GM12878 (cell line): ENCODE measurements at regions of chr9 and their contacts with region 1.

Region 1: DNA sequence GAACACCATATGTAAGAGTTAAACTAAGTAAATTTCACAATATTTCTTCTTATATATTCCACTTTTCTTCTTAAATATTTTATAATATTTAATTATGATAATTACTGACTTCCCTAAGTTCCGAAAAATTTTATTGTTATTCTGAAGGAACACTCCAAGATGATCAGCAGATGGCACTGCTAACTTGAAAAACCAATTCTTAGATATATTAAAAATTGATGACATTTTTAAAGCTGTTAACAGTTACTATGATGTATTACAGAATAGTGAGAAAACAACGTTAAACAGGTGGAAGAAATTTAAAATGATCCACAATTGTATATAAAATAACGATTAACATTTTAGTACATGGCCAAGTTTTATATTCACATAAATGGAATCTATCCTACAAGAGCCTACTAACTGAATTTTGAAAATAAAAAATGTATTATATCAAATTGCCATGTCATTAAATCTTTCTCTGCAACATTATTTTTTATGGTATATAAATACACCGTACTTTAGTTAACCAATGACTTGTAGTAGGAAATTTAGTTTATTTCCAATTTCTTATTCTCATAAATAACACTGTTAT is 30.1 kb upstream of the MUSK start:
- DNase-seq: no peak
- ATAC-seq: peak; percentile 43; the same call in 1 of the 3 replicates
- H3K4me3 ChIP-seq: no peak overlapping the region
- H3K27ac ChIP-seq: no peak overlapping the region
- H3K4me1 ChIP-seq: no peaks in the 10 kb centered on the region
- H3K27me3 ChIP-seq: no peaks in the 10 kb centered on the region
- CTCF ChIP-seq: peak in 2 of 3 experiments; percentile 11 to 21; a peak in 3 of 6 replicates
- EP300 ChIP-seq: no peak
- POLR2A ChIP-seq: no peak
- RAD21 ChIP-seq: peak; percentile 81

Region 2: GRCh38 chr9:110604171-110604601 is 34.3 kb before region 1 on chr9:
- CTCF ChIA-PET with region 1: no interaction called
- POLR2A ChIA-PET with region 1: no interaction called
- RAD21 ChIA-PET with region 1: no interaction called
- SMC1A ChIA-PET with region 1: no interaction called
- in situ Hi-C with region 1: no loop called
- intact Hi-C with region 1: no loop called
- DNase-seq: no peak
- ATAC-seq: peak; percentile 56
- H3K4me3 ChIP-seq: no peak overlapping the region
- H3K27ac ChIP-seq: no peak overlapping the region
- H3K4me1 ChIP-seq: no peaks in the 10 kb centered on the region
- H3K27me3 ChIP-seq: no peaks in the 10 kb centered on the region
- CTCF ChIP-seq: no peak
- EP300 ChIP-seq: no peak
- POLR2A ChIP-seq: no peak
- RAD21 ChIP-seq: no peak

Region 3: GRCh38 chr9:110650991-110651411 is 12.5 kb after region 1 on chr9:
- CTCF ChIA-PET with region 1: interaction called, 4 read pairs
- POLR2A ChIA-PET with region 1: no interaction called
- RAD21 ChIA-PET with region 1: no interaction called
- SMC1A ChIA-PET with region 1: interaction called, 11 read pairs
- in situ Hi-C with region 1: no loop called
- intact Hi-C with region 1: no loop called
- DNase-seq: no peak
- ATAC-seq: no peak
- H3K4me3 ChIP-seq: no peak overlapping the region
- H3K27ac ChIP-seq: no peak overlapping the region
- H3K4me1 ChIP-seq: no peaks in the 10 kb centered on the region
- H3K27me3 ChIP-seq: no peaks in the 10 kb centered on the region
- CTCF ChIP-seq: no peak
- EP300 ChIP-seq: no peak
- POLR2A ChIP-seq: no peak
- RAD21 ChIP-seq: no peak

Region 4: DNA sequence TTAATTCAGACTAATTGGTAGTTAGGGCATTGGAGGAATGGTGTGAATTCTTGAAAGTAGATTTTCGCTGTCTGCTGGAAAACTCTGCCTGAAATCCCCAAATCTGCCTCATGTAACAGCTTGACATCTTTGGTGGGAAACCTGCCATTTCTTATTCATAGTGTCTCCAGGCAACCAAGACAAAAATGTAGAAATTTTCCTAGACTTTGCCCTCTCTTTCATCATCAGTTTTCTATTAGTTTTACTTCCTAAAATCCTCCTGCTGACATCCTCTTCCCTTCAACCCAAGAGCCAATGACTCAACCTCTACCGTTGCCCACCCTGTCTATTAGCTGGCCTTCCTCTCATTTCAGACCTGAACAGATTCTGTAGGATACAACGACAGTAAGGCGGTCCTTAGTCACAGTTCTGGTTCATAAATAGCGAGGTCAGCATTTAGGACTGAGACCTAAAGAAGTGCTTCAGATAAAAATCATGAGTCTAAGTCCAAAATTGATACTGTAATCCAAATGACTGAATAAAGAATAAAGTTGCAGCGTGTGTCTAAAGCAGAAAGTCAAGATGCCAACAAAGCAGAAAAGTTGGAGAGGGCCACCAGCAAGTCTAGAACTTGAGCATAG is 164.1 kb after region 1 on chr9:
- CTCF ChIA-PET with region 1: no interaction called
- POLR2A ChIA-PET with region 1: no interaction called
- RAD21 ChIA-PET with region 1: interaction called, 17 read pairs
- SMC1A ChIA-PET with region 1: interaction called, 18 read pairs
- in situ Hi-C with region 1: no loop called
- intact Hi-C with region 1: no loop called
- DNase-seq: no peak
- ATAC-seq: peak; percentile 77
- H3K4me3 ChIP-seq: no peak overlapping the region
- H3K27ac ChIP-seq: no peak overlapping the region
- H3K4me1 ChIP-seq: peaks cover 9% of the 10 kb centered on the region
- H3K27me3 ChIP-seq: no peaks in the 10 kb centered on the region
- CTCF ChIP-seq: no peak
- EP300 ChIP-seq: peak in 1 of 2 experiments; percentile 29; a peak in 1 of 4 replicates
- POLR2A ChIP-seq: no peak
- RAD21 ChIP-seq: no peak

Region 5: DNA sequence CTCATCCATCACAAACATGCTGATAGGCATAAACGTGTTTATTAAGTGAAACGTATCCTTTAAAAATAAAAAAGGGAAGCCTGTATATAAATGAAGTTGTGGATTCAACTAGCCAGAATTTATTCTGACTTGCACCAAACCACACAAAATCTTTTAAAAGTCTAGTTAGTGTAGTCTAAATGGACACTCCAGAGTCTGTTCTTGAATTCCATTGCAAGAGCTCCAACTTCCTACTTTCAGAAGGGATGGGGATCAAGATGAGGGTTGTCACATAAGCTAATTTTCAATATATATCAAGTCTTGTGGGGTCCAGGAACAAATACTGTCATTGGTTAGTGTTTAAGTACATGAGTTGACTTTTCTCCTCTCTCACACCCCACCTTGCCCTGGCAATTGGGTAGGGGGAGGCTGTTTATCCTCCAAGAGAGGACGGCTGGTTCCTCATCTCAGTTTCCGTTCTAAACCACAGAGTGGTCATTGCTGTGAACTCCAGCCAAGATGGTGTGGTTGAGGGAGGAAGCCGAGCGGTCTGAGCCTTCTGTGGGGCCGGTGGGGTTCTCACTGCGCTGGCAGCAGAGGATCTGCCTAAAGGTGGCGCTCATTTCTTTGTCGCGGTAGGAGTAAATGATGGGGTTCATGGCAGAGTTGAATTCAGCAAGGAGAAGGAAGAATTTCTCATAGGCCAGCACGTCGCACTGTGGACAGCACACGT is 236.7 kb after region 1 on chr9:
- CTCF ChIA-PET with region 1: no interaction called
- POLR2A ChIA-PET with region 1: no interaction called
- RAD21 ChIA-PET with region 1: no interaction called
- SMC1A ChIA-PET with region 1: no interaction called
- in situ Hi-C with region 1: no loop called
- intact Hi-C with region 1: loop called (anchors 10 kb)
- DNase-seq: peak; percentile 48
- ATAC-seq: peak; percentile 95
- H3K4me3 ChIP-seq: no peak overlapping the region
- H3K27ac ChIP-seq: no peak overlapping the region
- H3K4me1 ChIP-seq: peaks cover 4% of the 10 kb centered on the region; the same call in 1 of the 2 replicates
- H3K27me3 ChIP-seq: no peaks in the 10 kb centered on the region
- CTCF ChIP-seq: peak; percentile 39 to 59 (median 40); a peak in 5 of 6 replicates
- EP300 ChIP-seq: 0 out of 4 replicates have a peak, but pooled peaks of 1 of the 2 experiments have one; percentile 48
- POLR2A ChIP-seq: no peak
- RAD21 ChIP-seq: peak; percentile 79

Region 6: GRCh38 chr9:111399772-111400563 is 761.5 kb after region 1 on chr9:
- CTCF ChIA-PET with region 1: no interaction called
- POLR2A ChIA-PET with region 1: no interaction called
- RAD21 ChIA-PET with region 1: no interaction called
- SMC1A ChIA-PET with region 1: no interaction called
- in situ Hi-C with region 1: no loop called
- intact Hi-C with region 1: loop called (anchors 10 kb)
- DNase-seq: no peak
- ATAC-seq: peak; percentile 88
- H3K4me3 ChIP-seq: no peak overlapping the region
- H3K27ac ChIP-seq: no peak overlapping the region
- H3K4me1 ChIP-seq: no peaks in the 10 kb centered on the region
- H3K27me3 ChIP-seq: no peaks in the 10 kb centered on the region
- CTCF ChIP-seq: peak; percentile 26 to 61 (median 45); a peak in 5 of 6 replicates
- EP300 ChIP-seq: no peak
- POLR2A ChIP-seq: no peak
- RAD21 ChIP-seq: peak; percentile 21; the same call in 1 of the 2 replicates